HCT116 (cell line): ENCODE measurements at regions of chr3 and their contacts with region 1.

Region 1: GRCh38 chr3:111071257-111072015 is at the start of gene NECTIN3:
- DNase-seq: peak; percentile 96
- ATAC-seq: peak; percentile 88
- H3K4me3 ChIP-seq: peak within 1 kb of the TSS; percentile 89 to 90
- H3K27ac ChIP-seq: peak within 1 kb of the TSS; percentile 96
- H3K4me1 ChIP-seq: peaks cover 12 to 42% of the 10 kb centered on the region in 2 experiments
- H3K27me3 ChIP-seq: no peaks in the 10 kb centered on the region
- CTCF ChIP-seq: no peak
- POLR2A ChIP-seq: peak; percentile 23
- RAD21 ChIP-seq: no peak
- total RNA-seq, gene NECTIN3: 93.6 TPM

Region 2: DNA sequence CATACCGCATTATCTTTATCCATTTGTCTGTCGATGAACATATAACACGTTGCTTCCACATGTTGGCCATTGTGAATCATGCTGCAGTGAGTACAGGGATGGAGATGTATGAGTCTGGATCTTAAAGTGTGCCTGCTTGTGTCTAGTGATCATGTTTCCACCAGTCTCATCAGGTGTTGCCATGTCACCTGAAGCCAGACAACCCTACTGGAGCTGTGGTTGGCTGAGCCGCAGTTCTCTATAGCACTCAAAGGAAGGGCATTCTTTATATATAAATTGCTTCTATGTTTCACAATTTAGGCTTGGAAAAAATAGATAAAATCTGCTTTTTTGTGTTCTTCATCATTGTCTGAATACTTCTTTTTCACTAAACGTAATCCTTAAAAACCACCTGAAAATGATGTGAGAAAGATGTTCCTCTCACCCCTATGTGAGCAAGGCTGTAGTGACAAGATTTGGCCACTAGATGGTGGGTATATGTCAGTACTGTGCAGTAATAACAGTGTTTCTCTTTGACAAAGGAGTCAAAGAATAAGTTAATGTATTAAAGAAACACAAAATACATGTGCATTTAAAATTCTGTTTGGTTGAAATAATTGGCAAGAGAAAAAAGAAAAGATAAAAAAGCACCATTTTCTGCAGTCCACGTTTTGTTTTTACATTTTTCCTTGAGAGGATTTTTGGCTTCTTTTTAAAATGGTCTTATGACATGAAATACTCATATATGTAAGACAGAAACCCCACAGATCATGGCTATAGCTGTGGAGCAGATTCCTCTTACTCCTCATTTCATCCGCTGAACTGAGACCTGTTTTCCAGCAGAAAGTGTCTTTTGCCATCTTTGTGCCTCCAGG is 1339.6 kb before region 1 on chr3:
- CTCF ChIA-PET with region 1: no interaction called
- POLR2A ChIA-PET with region 1: no interaction called
- RAD21 ChIA-PET with region 1: no interaction called
- intact Hi-C with region 1: loop called (anchors 5 kb)
- DNase-seq: peak; percentile 29
- ATAC-seq: peak; percentile 85; the same call in 1 of the 2 replicates
- H3K4me3 ChIP-seq: no peak overlapping the region
- H3K27ac ChIP-seq: no peak overlapping the region
- H3K4me1 ChIP-seq: peaks cover 0 to 12% of the 10 kb centered on the region in 2 experiments; a peak in 2 of 4 replicates
- H3K27me3 ChIP-seq: no peaks in the 10 kb centered on the region
- CTCF ChIP-seq: peak; percentile 51 to 91 (median 85); a peak in 5 of 6 replicates
- POLR2A ChIP-seq: no peak
- RAD21 ChIP-seq: peak; percentile 86

Region 3: DNA sequence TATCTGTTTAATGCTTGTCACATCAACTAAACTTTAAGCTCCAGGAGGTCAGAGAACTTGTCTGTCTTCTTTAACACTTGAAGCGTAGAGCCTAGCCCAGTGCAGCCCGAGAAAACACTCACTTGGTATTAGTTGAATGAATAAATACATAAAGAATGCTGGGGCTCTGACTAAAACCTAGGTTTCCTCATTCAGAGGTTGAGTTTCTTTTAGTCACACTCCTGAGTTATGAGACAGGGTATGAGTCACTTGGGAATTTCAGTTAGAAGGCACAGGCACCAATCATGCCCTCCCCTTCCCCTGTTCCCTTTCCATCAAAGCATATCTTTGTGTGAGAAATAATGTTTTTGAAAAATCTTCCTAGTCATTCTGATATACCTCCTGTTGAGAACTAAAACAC is 1144.3 kb before region 1 on chr3:
- CTCF ChIA-PET with region 1: no interaction called
- POLR2A ChIA-PET with region 1: no interaction called
- RAD21 ChIA-PET with region 1: no interaction called
- intact Hi-C with region 1: loop called (anchors 2 kb)
- DNase-seq: peak; percentile 98
- ATAC-seq: peak; percentile 83
- H3K4me3 ChIP-seq: peak overlapping the region in 1 of 2 experiments; percentile 44; a peak in 1 of 4 replicates
- H3K27ac ChIP-seq: peak overlapping the region; percentile 88
- H3K4me1 ChIP-seq: peaks cover 37 to 82% of the 10 kb centered on the region in 2 experiments
- H3K27me3 ChIP-seq: no peaks in the 10 kb centered on the region
- CTCF ChIP-seq: no peak
- POLR2A ChIP-seq: no peak
- RAD21 ChIP-seq: peak; percentile 35

Region 4: DNA sequence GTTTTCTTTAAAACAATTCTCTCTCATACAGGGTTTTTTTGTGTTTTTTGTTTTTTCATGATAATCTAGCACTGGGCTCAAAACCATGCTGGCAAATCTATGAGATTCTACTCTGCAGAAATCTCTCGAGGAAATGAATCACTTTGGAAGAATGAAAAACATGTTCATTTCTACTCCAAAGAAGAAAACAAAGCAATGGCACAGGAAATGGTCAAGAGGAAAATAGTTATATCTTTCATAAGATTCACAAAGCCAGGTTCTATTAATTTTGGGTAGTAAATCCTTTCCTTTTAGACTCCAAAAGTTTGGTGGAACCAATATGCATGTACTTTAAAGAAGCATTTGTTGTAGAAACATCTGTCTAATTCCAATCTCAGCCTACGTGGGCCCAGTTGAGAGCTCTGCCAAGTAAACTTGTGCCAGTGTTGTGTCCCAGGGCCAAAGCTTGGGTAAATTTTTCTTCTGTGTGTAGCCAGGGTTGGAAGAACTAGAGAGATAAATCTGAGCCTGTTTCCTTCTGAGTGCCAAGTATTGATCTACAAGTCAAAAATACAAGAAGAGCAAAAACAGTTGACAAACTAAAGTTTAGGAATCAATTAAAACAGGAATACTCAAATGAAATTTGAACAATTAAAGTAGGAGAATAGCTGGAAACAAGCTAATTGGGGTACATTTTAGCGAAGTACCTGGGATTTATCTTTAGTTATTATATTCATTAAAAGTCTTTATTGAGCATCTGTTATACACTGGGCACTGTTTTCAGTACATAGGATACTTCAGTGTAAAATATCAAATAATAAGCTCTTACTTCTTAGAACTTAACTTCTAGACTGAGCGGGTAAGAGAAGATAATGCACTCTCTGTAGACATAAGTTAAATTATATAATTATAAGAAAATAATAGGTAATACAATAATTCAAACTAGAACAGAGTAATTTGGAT is 657.4 kb before region 1 on chr3:
- CTCF ChIA-PET with region 1: no interaction called
- POLR2A ChIA-PET with region 1: no interaction called
- RAD21 ChIA-PET with region 1: no interaction called
- intact Hi-C with region 1: loop called (anchors 10 kb)
- DNase-seq: no peak
- ATAC-seq: peak; percentile 52; the same call in 1 of the 2 replicates
- H3K4me3 ChIP-seq: no peak overlapping the region
- H3K27ac ChIP-seq: peak overlapping the region; percentile 85
- H3K4me1 ChIP-seq: peaks cover 28 to 41% of the 10 kb centered on the region in 2 experiments
- H3K27me3 ChIP-seq: no peaks in the 10 kb centered on the region
- CTCF ChIP-seq: no peak
- POLR2A ChIP-seq: no peak
- RAD21 ChIP-seq: no peak

Region 5: DNA sequence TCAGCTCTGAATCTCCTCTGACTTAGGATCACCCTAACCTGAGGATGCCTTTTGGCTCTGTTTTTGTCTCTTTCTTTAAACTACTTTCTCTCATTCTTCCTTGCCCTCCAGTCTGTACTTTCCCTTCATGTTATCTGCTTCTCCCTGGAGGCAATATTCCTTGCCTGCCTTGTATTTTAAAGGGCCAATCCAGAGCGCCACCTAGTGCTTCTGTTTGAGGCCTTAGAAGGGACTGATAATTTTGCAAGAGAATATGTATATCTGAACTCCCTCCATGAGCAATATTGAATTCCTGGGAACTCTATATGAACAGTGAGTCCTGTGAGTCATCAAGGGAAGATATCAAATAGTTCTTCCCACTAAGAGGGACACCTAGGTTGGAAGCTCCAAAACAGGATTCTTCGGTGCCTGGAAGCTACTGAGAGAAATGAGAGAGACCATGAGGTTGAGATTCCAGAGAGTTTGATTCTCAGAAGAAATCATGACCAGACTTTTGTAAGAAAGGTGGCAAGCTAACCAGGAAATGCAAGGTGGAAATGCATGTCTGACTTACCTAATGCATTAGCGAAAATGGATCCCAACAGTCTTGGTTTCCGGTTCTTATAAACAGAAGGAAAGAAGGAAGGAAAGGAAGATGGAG is 266.7 kb after region 1 on chr3:
- CTCF ChIA-PET with region 1: no interaction called
- POLR2A ChIA-PET with region 1: no interaction called
- RAD21 ChIA-PET with region 1: no interaction called
- intact Hi-C with region 1: loop called (anchors 10 kb)
- DNase-seq: peak; percentile 66
- ATAC-seq: peak; percentile 95
- H3K4me3 ChIP-seq: no peak overlapping the region
- H3K27ac ChIP-seq: no peak overlapping the region
- H3K4me1 ChIP-seq: peaks cover 0 to 18% of the 10 kb centered on the region in 2 experiments; a peak in 2 of 4 replicates
- H3K27me3 ChIP-seq: no peaks in the 10 kb centered on the region
- CTCF ChIP-seq: peak; percentile 72 to 92 (median 83); a peak in 5 of 6 replicates
- POLR2A ChIP-seq: no peak
- RAD21 ChIP-seq: peak; percentile 92